ENCODE measurements at regions of chr10 and their contacts with region 1.

Region 1: DNA sequence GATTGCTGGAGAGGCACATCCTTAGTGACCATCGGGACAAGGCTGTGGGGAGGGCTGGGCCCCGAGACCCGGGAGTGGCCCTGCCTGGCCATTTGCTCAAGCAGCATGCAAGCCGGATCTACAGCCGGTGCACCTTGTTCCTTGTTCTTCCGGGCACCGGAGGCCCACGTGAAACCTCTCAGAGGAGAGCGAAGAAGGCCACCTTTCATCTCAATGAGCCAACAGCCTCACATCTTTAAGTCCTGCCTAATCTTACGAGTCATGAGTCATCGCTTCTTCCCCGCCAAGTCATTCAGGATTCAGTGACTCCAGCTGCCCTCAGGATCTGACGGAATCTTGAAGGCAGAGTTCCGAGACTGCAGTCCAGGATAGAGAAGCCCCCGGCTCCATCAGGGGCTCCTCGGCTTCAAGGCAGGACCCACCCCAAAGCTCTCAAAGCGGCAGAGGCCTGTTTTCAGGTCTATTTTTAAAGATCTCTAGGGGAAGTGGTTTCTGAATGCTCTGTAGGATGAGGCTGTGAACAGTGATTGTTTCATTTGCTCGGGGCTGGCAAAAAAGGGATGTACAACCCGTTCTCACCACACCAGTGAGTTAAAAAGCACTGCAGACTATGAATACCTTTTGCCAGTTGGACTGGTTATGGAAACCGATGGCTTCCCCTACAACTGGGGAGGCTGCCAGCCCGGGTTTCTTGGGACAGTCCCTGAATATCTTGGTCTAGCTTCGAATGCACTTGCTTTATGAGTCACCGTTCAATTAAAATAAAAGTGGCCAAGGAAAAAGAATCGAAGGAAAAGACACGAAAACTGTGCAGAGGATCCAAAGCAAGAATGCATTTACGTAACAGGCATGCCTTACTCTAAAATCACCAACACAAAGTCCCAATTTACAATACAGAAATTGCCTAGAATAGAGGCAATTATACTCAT is 57.2 kb upstream of the ECHDC3 start:
- DNase-seq: peak; percentile 38 to 84 (median 62)
- ATAC-seq: peak; percentile 86
- H3K4me3 ChIP-seq: peak overlapping the region; percentile 51
- H3K4me3 Mint-ChIP-seq: peak overlapping the region; percentile 87
- H3K27ac ChIP-seq: peak overlapping the region; percentile 86 to 88
- H3K27ac Mint-ChIP-seq: peak overlapping the region; percentile 98
- H3K4me1 ChIP-seq: peaks cover 51% of the 10 kb centered on the region
- H3K4me1 Mint-ChIP-seq: peaks cover 73% of the 10 kb centered on the region
- H3K27me3 ChIP-seq: no peaks in the 10 kb centered on the region
- H3K27me3 Mint-ChIP-seq: no peaks in the 10 kb centered on the region
- CTCF ChIP-seq: no peak

Region 2: GRCh38 chr10:11673346-11674280 is 11.4 kb before region 1 on chr10:
- CTCF ChIA-PET with region 1: no interaction called
- POLR2A ChIA-PET with region 1: interaction called, 10 read pairs
- intact Hi-C with region 1: no loop called
- DNase-seq: peak in 1 of 14 experiments; percentile 12
- ATAC-seq: no peak
- H3K4me3 ChIP-seq: no peak overlapping the region
- H3K4me3 Mint-ChIP-seq: no peak overlapping the region
- H3K27ac ChIP-seq: no peak overlapping the region
- H3K27ac Mint-ChIP-seq: no peak overlapping the region
- H3K4me1 ChIP-seq: peaks cover 8% of the 10 kb centered on the region
- H3K4me1 Mint-ChIP-seq: peaks cover 13% of the 10 kb centered on the region
- H3K27me3 ChIP-seq: no peaks in the 10 kb centered on the region
- H3K27me3 Mint-ChIP-seq: no peaks in the 10 kb centered on the region
- CTCF ChIP-seq: no peak

Region 3: DNA sequence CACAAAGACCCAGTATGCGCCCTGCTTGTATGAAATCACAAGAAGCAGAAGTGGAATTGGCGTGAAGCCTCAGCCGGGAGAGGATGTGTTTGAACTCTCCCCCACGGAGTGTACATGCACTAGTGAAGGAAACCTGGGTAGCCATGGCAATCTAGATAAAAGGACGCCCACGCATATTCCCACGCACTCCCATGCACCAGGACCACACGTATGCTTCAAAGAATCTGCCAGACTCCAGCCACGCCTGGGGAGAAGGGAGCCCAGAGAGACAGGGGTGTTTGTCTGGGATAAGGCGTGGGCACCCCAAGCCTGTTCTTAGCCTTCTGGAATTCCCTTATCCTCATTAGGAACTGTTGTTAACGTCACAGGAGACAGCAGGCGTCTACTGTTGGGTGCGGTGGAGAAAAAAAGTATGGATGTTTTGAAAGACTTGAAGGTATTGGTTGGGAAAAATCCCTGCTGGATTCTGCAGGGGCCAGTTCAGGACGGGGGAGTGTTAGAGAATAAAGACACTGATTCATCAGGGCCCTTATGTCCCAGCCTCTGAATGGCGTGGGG is 28.3 kb after region 1 on chr10:
- CTCF ChIA-PET with region 1: no interaction called
- POLR2A ChIA-PET with region 1: interaction called, 24 read pairs
- intact Hi-C with region 1: loop called in 1 of 2 experiments (anchors 2 kb)
- DNase-seq: no peak
- ATAC-seq: no peak
- H3K4me3 ChIP-seq: no peak overlapping the region
- H3K4me3 Mint-ChIP-seq: no peak overlapping the region
- H3K27ac ChIP-seq: no peak overlapping the region
- H3K27ac Mint-ChIP-seq: no peak overlapping the region
- H3K4me1 ChIP-seq: peaks cover 10% of the 10 kb centered on the region
- H3K4me1 Mint-ChIP-seq: peaks cover 29% of the 10 kb centered on the region
- H3K27me3 ChIP-seq: peaks cover 0 to 3% of the 10 kb centered on the region in 2 experiments
- H3K27me3 Mint-ChIP-seq: peaks cover 12% of the 10 kb centered on the region
- CTCF ChIP-seq: no peak

Region 4: GRCh38 chr10:11724938-11725776 is 40.2 kb after region 1 on chr10:
- CTCF ChIA-PET with region 1: no interaction called
- POLR2A ChIA-PET with region 1: interaction called, 7 read pairs
- intact Hi-C with region 1: loop called (anchors 5 kb)
- DNase-seq: peak in 4 of 14 experiments; percentile 18 to 70 (median 52)
- ATAC-seq: peak; percentile 80
- H3K4me3 ChIP-seq: no peak overlapping the region
- H3K4me3 Mint-ChIP-seq: no peak overlapping the region
- H3K27ac ChIP-seq: no peak overlapping the region
- H3K27ac Mint-ChIP-seq: no peak overlapping the region
- H3K4me1 ChIP-seq: no peaks in the 10 kb centered on the region
- H3K4me1 Mint-ChIP-seq: peaks cover 6% of the 10 kb centered on the region
- H3K27me3 ChIP-seq: no peaks in the 10 kb centered on the region
- H3K27me3 Mint-ChIP-seq: no peaks in the 10 kb centered on the region
- CTCF ChIP-seq: peak; percentile 69